ENCODE measurements at regions of chr2 and their contacts with region 1.

Region 1: GRCh38 chr2:37389989-37390765 is 45.7 kb downstream of the QPCT start:
- DNase-seq: peak; percentile 40 to 46
- H3K4me3 ChIP-seq: no peak overlapping the region
- H3K4me3 Mint-ChIP-seq: no peak overlapping the region
- H3K27ac Mint-ChIP-seq: no peak overlapping the region
- H3K4me1 ChIP-seq: peaks cover 12% of the 10 kb centered on the region
- H3K4me1 Mint-ChIP-seq: peaks cover 26% of the 10 kb centered on the region
- H3K27me3 ChIP-seq: no peaks in the 10 kb centered on the region
- H3K27me3 Mint-ChIP-seq: no peaks in the 10 kb centered on the region
- CTCF ChIP-seq: no peak

Region 2: DNA sequence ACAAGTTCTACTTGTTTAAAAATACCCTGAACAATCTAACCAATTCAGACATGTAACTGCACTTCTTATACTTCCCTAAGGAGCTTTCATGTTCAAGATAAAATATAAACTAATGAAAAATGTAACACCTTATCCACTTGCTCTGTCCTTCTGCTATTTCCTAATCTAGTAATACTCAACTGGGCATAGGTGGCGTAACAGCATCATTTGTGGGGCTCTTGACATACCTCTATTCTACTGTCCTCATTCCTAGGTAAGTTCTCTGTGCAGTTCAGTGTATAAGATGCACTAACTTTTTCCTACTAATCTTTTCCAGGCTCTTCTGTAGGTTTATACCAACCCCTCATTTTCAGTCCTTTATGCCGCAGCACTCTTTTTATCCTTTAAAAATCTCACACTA is 102.2 kb before region 1 on chr2:
- CTCF ChIA-PET with region 1: no interaction called
- POLR2A ChIA-PET with region 1: no interaction called
- intact Hi-C with region 1: loop called (anchors 5 kb)
- DNase-seq: no peak
- H3K4me3 ChIP-seq: no peak overlapping the region
- H3K4me3 Mint-ChIP-seq: no peak overlapping the region
- H3K27ac Mint-ChIP-seq: no peak overlapping the region
- H3K4me1 ChIP-seq: no peaks in the 10 kb centered on the region
- H3K4me1 Mint-ChIP-seq: no peaks in the 10 kb centered on the region
- H3K27me3 ChIP-seq: no peaks in the 10 kb centered on the region
- H3K27me3 Mint-ChIP-seq: no peaks in the 10 kb centered on the region
- CTCF ChIP-seq: peak; percentile 20 to 30

Region 3: DNA sequence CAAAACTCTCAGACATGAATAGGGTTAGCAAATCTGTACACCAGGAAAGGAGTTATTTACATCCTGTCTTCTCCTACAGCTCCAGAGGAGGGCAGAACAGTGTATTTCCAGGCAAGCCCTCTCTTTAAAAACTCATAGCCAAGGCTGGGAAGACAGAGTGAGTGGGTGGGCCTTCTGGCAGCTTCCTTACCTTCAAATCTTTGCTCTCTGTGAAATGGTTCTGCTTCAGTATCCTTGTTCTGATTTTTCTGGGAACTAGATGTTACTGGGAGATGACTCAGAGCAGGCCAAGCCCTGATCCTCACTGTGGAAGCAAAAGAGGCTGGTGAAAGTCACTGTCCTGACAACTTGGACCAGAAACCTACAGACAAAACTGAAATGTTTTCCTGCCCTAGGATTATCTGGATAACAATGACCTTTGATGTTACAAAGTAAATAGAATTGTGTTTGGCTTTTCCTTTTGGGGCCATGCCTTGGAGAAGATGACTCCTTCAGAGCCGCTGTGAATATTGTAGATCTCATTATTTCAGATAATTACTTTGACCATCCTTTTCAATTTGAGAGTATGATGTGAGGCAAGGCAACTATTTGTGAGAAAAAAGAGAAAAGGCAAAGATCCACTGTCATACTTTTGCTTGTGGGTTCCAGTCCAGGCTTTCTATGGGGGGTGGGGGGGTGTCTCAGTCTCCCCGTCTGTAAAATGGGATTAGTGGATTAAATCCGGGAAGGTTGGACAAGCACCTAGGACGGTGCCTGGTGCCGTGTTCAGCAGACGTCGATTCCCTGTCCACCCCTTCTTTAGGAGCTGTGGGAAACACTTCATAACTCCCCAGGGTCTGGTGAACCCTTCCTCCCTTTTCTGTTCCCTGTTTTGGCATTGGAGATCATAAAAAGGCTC is 46.4 kb before region 1 on chr2:
- CTCF ChIA-PET with region 1: no interaction called
- POLR2A ChIA-PET with region 1: no interaction called
- intact Hi-C with region 1: loop called (anchors 2 kb)
- DNase-seq: peak; percentile 40 to 50
- H3K4me3 ChIP-seq: peak overlapping the region; percentile 79
- H3K4me3 Mint-ChIP-seq: peak overlapping the region; percentile 75
- H3K27ac Mint-ChIP-seq: peak overlapping the region; percentile 25
- H3K4me1 ChIP-seq: peaks cover 16% of the 10 kb centered on the region
- H3K4me1 Mint-ChIP-seq: peaks cover 10% of the 10 kb centered on the region
- H3K27me3 ChIP-seq: no peaks in the 10 kb centered on the region
- H3K27me3 Mint-ChIP-seq: no peaks in the 10 kb centered on the region
- CTCF ChIP-seq: peak; percentile 32 to 35